ENCODE measurements at regions of chr16 and their contacts with region 1.

Region 1: GRCh38 chr16:35221482-35222185 is 1762.2 kb downstream of the TP53TG3F start:
- DNase-seq: no peak
- ATAC-seq: no peak
- H3K4me3 ChIP-seq: no peak overlapping the region
- H3K27ac ChIP-seq: no peak overlapping the region
- H3K4me1 ChIP-seq: no peaks in the 10 kb centered on the region
- H3K27me3 ChIP-seq: no peaks in the 10 kb centered on the region
- CTCF ChIP-seq: no peak

Region 2: GRCh38 chr16:35154627-35155026 is 67.0 kb before region 1 on chr16:
- intact Hi-C with region 1: no loop called
- DNase-seq: no peak
- ATAC-seq: no peak
- H3K4me3 ChIP-seq: no peak overlapping the region
- H3K27ac ChIP-seq: no peak overlapping the region
- H3K4me1 ChIP-seq: no peaks in the 10 kb centered on the region
- H3K27me3 ChIP-seq: no peaks in the 10 kb centered on the region
- CTCF ChIP-seq: no peak

Region 3: GRCh38 chr16:35188288-35189155 is 33.1 kb before region 1 on chr16:
- intact Hi-C with region 1: loop called in 1 of 10 experiments (anchors 2 kb)
- DNase-seq: no peak
- ATAC-seq: peak in 1 of 8 donors; percentile 25
- H3K4me3 ChIP-seq: no peak overlapping the region
- H3K27ac ChIP-seq: no peak overlapping the region
- H3K4me1 ChIP-seq: no peaks in the 10 kb centered on the region
- H3K27me3 ChIP-seq: peaks cover 0 to 5% (median 0%) of the 10 kb centered on the region in 7 donors
- CTCF ChIP-seq: peak in 4 of 9 donors; percentile 18 to 26 (median 22)

Measured in heart right ventricle (tissue), 16 donors.